ENCODE measurements at regions of chr1 and their contacts with region 1.

Region 1: GRCh38 chr1:218459878-218460711 is 115.0 kb downstream of the TGFB2 start:
- DNase-seq: peak in 1 of 2 donors; percentile 72
- H3K4me3 ChIP-seq: peak overlapping the region in 1 of 2 donors; percentile 51
- H3K27ac ChIP-seq: peak overlapping the region; percentile 77 to 83
- H3K4me1 ChIP-seq: peaks cover 11 to 41% of the 10 kb centered on the region in 2 donors
- H3K27me3 ChIP-seq: no peaks in the 10 kb centered on the region
- CTCF ChIP-seq: no peak

Region 2: GRCh38 chr1:218369688-218370511 is 90.2 kb before region 1 on chr1:
- intact Hi-C with region 1: loop called (anchors 5 kb)
- DNase-seq: no peak
- H3K4me3 ChIP-seq: peak overlapping the region in 1 of 2 donors; percentile 11
- H3K27ac ChIP-seq: peak overlapping the region; percentile 64 to 76
- H3K4me1 ChIP-seq: peaks cover 14 to 25% of the 10 kb centered on the region in 2 donors
- H3K27me3 ChIP-seq: no peaks in the 10 kb centered on the region
- CTCF ChIP-seq: no peak

Region 3: GRCh38 chr1:218480137-218480536 is 20.0 kb after region 1 on chr1:
- intact Hi-C with region 1: loop called (anchors 2 kb)
- DNase-seq: peak in 1 of 2 donors; percentile 77
- H3K4me3 ChIP-seq: no peak overlapping the region
- H3K27ac ChIP-seq: peak overlapping the region; percentile 35 to 37
- H3K4me1 ChIP-seq: peaks cover 3 to 29% of the 10 kb centered on the region in 2 donors
- H3K27me3 ChIP-seq: no peaks in the 10 kb centered on the region
- CTCF ChIP-seq: no peak